Heart right ventricle (tissue), 16 donors: ENCODE measurements at regions of chr17 and their contacts with region 1.

Region 1: DNA sequence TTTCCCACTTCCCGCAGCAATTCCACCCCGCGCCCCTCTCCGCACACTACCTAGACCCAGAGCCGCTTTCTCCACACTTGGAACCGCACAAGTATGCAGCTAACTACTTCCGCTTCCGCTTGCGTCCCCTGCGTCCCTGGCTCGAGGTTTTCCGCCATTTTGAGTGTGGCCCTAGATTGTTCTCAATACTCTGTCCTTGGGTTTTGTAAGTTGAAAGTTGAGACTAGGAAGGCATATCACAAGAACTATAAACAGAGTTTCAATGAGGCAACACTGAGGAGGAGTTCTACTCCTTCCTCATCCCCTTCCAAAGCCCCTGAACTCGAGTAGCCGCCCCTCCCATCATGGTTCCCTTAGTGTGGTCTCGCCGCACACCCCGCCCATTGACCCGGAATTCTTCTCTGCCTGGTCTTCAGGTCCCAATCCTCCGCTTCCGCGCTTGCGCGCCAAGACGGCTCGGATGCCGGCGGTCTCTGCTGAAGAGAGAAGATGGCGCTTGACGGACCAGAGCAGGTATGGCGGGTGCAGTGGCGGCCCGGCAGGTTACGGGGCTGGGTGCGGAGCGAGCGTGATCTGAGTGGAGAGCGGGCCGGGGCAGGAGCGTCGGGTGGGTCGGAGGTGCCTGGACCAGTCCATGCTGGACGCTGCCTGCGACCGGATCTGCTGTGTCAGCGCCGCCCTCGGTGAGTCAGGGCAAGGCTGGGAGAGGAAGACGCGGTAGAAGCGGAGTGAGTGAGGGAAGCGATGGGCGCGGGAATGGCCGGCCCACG is at the starts of genes FTSJ3 and PSMC5:
- DNase-seq: peak; percentile 94 to 97
- ATAC-seq: peak; percentile 93 to 98 (median 96)
- H3K4me3 ChIP-seq: peak within 1 kb of the TSS; percentile 69 to 98 (median 86)
- H3K27ac ChIP-seq: peak within 1 kb of the TSS; percentile 84 to 98 (median 94)
- H3K4me1 ChIP-seq: peaks cover 5 to 35% (median 29%) of the 10 kb centered on the region in 9 donors
- H3K27me3 ChIP-seq: no peaks in the 10 kb centered on the region
- CTCF ChIP-seq: peak in 7 of 9 donors; percentile 17 to 71 (median 59)
- total RNA-seq, gene FTSJ3: 17.5 to 43.0 (median 28.4) TPM
- total RNA-seq, gene PSMC5: 92.9 to 153 (median 119) TPM

Region 2: GRCh38 chr17:63842540-63843386 is 15.6 kb after region 1 on chr17 and contains the start of gene SMARCD2:
- intact Hi-C with region 1: loop called in 3 of 10 experiments (anchors 1 kb)
- DNase-seq: peak; percentile 98 to 99
- ATAC-seq: peak; percentile 88 to 94 (median 90)
- H3K4me3 ChIP-seq: peak within 1 kb of the TSS; percentile 73 to 95 (median 90)
- H3K27ac ChIP-seq: peak within 1 kb of the TSS; percentile 87 to 98 (median 94)
- H3K4me1 ChIP-seq: peaks cover 30 to 53% (median 47%) of the 10 kb centered on the region in 9 donors
- H3K27me3 ChIP-seq: no peaks in the 10 kb centered on the region
- CTCF ChIP-seq: peak in 2 of 9 donors; percentile 6
- total RNA-seq, gene SMARCD2: 11.6 to 35.7 (median 17.3) TPM

Region 3: DNA sequence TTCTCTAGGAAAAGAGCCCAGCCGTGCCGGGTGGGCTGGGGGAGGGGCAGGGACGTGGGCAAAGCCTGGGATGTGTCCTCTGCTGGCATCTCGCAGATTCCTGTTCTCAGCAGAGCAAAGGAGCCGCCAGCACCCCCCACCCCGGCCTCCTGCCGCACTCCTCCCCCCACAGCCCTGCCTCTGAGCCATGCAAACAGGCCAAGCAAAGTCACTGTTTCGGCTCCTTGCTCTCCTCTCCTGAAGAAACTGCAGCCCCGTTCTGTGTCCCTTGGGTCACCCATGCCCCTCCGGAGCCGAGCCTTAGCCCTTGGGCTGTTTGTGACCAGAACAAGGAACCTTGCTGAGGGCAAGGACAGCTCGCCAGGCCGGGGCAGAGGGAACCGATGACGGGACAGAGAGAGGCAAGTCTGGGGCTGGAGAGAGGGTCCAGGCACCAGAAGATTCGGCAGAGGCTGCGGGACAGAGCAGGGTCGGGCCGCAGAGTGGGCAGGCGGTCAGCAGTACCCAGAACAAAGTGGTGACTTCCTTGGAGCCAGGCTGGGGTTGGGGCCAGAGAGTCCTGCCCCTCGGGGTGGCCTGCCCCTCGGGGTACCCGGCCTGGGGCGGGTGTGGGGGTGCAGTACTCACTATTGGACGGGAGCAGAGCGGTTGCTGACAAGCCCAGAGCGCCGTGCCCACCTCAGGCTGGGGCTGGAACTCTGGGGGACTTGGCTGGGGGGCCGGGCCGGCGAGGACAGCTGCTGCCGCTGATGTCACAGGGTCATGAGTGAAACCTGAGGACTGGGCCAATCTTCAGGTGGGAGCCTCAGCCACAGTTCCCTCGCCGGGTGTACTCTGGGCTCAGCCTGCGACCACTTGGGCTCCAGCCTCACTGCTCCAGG is 161.8 kb after region 1 on chr17:
- intact Hi-C with region 1: no loop called
- DNase-seq: no peak
- ATAC-seq: peak in 1 of 8 donors; percentile 2
- H3K4me3 ChIP-seq: no peak overlapping the region
- H3K27ac ChIP-seq: no peak overlapping the region
- H3K4me1 ChIP-seq: peaks cover 28 to 65% (median 45%) of the 10 kb centered on the region in 9 donors
- H3K27me3 ChIP-seq: peaks cover 0 to 28% (median 11%) of the 10 kb centered on the region in 7 donors
- CTCF ChIP-seq: no peak

Region 4: GRCh38 chr17:64506576-64507477 is 679.6 kb after region 1 on chr17 and contains the start of gene CEP95:
- intact Hi-C with region 1: loop called in 1 of 10 experiments (anchors 10 kb)
- DNase-seq: peak; percentile 93 to 97
- ATAC-seq: peak; percentile 76 to 89 (median 86)
- H3K4me3 ChIP-seq: peak within 1 kb of the TSS; percentile 72 to 99 (median 91)
- H3K27ac ChIP-seq: peak within 1 kb of the TSS; percentile 86 to 100 (median 99)
- H3K4me1 ChIP-seq: peaks cover 6 to 61% (median 51%) of the 10 kb centered on the region in 9 donors
- H3K27me3 ChIP-seq: no peaks in the 10 kb centered on the region
- CTCF ChIP-seq: no peak
- total RNA-seq, gene CEP95: 8.6 to 19.7 (median 14.6) TPM